PC-9 (cell line): ENCODE measurements at regions of chr12 and their contacts with region 1.

Region 1: DNA sequence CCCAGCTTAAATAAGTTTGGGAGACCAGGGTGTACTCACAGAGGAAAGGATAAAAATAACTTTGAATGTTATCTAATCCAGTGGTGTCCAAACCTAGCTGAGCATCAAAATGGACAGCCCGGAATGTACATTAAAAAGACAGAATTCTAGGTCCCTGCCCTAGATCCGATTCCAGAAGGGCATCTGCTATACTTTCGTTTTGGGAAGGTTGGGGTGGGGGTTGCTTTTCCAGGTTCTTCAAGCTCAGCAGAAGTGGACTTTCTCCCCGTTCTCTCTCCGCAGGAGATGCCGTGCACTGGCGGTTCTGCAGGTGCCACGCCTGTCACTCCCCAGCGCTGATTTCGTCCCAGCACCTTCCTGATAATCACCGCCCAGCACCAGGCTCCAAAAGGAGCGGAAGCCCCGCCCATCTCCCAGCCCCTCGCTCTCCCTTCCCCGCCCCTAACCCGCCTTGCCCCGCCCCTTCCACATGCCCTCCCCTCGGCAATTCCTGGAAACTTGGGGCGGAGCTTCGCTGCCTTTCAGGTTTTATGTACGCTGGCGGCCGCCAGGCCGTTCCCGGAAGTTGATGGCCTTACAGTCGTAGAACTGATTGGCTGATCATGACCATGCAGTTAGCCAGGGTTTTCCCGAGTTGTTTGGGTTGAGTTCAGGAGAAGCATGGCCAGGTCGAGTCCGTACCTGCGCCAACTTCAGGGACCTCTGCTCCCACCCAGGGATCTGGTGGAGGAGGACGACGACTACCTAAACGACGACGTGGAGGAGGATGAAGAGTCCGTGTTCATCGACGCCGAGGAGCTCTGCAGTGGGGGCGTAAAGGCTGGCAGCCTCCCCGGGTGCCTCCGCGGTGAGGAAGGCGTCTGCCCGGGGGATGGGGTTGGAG is at the start of gene HELB:
- DNase-seq: peak; percentile 92 to 94
- H3K4me3 ChIP-seq: peak within 1 kb of the TSS; percentile 89
- H3K27ac ChIP-seq: peak within 1 kb of the TSS; percentile 61
- H3K4me1 ChIP-seq: peaks cover 9% of the 10 kb centered on the region; the same call in 1 of the 2 replicates
- H3K27me3 ChIP-seq: no peaks in the 10 kb centered on the region
- CTCF ChIP-seq: no peak
- total RNA-seq, gene HELB: 8.2 and 10.0 TPM in 2 replicates

Region 2: DNA sequence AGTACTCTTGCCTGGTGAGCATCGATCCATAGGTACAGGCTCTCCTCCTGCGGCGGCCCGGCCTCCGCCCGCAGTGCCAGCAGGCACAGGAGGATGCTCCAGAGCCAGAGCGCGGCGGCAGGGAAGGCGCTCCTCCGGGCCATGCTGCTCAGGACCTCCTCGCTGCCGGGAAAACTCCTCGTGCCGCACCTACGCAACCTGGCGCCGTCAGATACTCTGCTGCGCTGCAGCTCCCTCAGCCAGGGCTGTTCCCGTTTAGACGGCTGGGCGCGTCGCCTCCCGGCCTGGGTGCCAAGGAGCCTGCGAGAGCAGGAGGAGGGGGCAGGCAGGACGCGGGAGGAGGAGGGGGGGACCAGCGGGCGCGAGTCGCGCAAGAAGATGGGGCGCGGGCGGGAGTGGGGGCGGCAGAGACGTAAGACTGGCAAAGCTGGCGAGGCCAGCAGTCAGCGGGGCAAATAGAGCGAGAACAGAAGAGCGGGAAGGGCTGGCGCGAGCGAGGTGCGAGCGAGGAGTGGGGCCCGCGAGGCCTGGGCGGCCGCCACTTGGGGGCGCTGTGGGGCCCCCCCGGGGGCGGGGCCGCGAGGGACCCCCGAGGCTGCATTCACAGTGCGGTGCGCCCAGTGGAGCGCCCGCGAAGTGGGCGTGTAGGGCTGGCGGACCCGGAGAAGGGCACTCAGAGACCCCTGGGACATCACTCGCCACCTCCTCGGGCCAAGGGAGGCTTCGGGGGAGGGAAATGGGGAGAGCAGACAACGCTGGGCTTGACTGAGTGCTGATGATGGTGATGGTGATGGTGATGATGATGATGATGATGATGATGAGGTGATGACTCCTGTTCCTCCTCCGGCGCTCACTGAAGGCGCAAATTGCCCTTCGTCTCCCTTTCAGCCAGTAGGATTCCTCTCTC is 1180.9 kb before region 1 on chr12 and contains the start of gene WIF1:
- CTCF ChIA-PET with region 1: interaction called, 13 read pairs
- POLR2A ChIA-PET with region 1: no interaction called
- intact Hi-C with region 1: no loop called
- DNase-seq: peak in 1 of 2 experiments; percentile 23
- H3K4me3 ChIP-seq: no peak within 1 kb of the TSS
- H3K27ac ChIP-seq: no peak within 1 kb of the TSS
- H3K4me1 ChIP-seq: no peaks in the 10 kb centered on the region
- H3K27me3 ChIP-seq: no peaks in the 10 kb centered on the region
- CTCF ChIP-seq: no peak
- total RNA-seq, gene WIF1: not detected in 2 replicates

Region 3: DNA sequence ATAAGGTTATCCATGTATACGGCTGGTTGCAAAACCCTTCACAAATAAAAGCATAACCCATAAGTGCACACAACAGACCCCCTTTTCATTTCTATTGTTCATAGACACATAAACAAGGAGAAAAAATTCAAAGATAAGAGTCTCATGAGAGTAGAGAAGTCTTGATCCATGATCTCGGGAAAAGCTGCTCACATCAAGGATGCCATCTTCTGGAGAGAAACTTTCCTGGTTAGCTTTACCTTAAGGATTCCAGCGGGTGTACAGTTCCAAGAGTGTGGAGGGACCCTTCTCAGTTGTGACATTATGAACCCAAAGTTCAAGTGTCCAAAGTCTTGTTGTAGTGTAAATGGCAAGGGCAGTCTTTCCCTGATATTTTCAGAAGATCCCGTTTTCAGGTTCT is 316.1 kb before region 1 on chr12:
- CTCF ChIA-PET with region 1: no interaction called
- POLR2A ChIA-PET with region 1: no interaction called
- intact Hi-C with region 1: no loop called
- DNase-seq: peak in 1 of 2 experiments; percentile 32
- H3K4me3 ChIP-seq: no peak overlapping the region
- H3K27ac ChIP-seq: no peak overlapping the region
- H3K4me1 ChIP-seq: no peaks in the 10 kb centered on the region
- H3K27me3 ChIP-seq: no peaks in the 10 kb centered on the region
- CTCF ChIP-seq: no peak

Region 4: GRCh38 chr12:66269757-66270383 is 32.3 kb before region 1 on chr12:
- CTCF ChIA-PET with region 1: no interaction called
- POLR2A ChIA-PET with region 1: no interaction called
- intact Hi-C with region 1: no loop called
- DNase-seq: no peak
- H3K4me3 ChIP-seq: no peak overlapping the region
- H3K27ac ChIP-seq: no peak overlapping the region
- H3K4me1 ChIP-seq: no peaks in the 10 kb centered on the region
- H3K27me3 ChIP-seq: no peaks in the 10 kb centered on the region
- CTCF ChIP-seq: peak; percentile 71

Region 5: GRCh38 chr12:66329941-66330340 is 27.8 kb after region 1 on chr12:
- CTCF ChIA-PET with region 1: no interaction called
- POLR2A ChIA-PET with region 1: no interaction called
- intact Hi-C with region 1: no loop called
- DNase-seq: no peak
- H3K4me3 ChIP-seq: no peak overlapping the region
- H3K27ac ChIP-seq: no peak overlapping the region
- H3K4me1 ChIP-seq: no peaks in the 10 kb centered on the region
- H3K27me3 ChIP-seq: no peaks in the 10 kb centered on the region
- CTCF ChIP-seq: no peak

Region 6: DNA sequence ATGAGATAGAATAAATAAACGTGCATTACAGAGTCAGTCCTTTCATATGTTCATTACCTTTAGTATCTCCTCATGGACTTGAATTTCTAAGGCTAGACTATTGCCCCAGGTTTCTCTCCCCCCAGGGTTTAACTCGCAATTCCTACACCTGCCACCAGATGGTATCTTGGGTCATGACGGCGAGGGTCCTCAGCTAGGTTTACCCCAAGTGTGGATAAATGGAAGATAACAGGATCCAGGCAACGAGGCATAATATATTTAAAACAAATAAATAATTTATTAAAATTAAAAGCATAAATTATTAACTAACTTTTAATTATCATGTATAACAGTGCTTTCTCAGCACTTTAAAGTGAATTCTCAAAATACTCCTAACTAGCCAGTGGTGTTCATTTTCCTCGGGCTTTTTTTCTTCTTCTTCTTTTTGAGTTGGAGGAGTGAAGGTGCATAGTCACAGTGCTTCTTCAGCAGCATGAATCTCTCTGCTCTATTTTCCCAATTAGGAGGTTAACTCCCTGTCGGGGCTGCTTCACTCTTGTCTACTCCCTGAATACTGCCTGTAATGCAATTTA is 723.4 kb after region 1 on chr12:
- CTCF ChIA-PET with region 1: no interaction called
- POLR2A ChIA-PET with region 1: interaction called, 25 read pairs
- intact Hi-C with region 1: no loop called
- DNase-seq: peak in 1 of 2 experiments; percentile 30
- H3K4me3 ChIP-seq: no peak overlapping the region
- H3K27ac ChIP-seq: no peak overlapping the region
- H3K4me1 ChIP-seq: no peaks in the 10 kb centered on the region
- H3K27me3 ChIP-seq: no peaks in the 10 kb centered on the region
- CTCF ChIP-seq: peak; percentile 84